Endothelial cell of umbilical vein (primary cell): ENCODE measurements at regions of chr9 and their contacts with region 1.

Region 1: GRCh38 chr9:38088006-38088925 is 19.2 kb upstream of the SHB start:
- DNase-seq: peak; percentile 70
- H3K4me3 ChIP-seq: no peak overlapping the region
- H3K27ac ChIP-seq: no peak overlapping the region
- H3K4me1 ChIP-seq: peaks cover 11% of the 10 kb centered on the region
- H3K27me3 ChIP-seq: no peaks in the 10 kb centered on the region
- CTCF ChIP-seq: peak; percentile 96 to 98
- POLR2A ChIP-seq: no peak

Region 2: GRCh38 chr9:37938121-37938891 is 150.0 kb before region 1 on chr9:
- CTCF ChIA-PET with region 1: interaction called, 13 read pairs
- POLR2A ChIA-PET with region 1: no interaction called
- dilution Hi-C with region 1: no loop called
- intact Hi-C with region 1: no loop called
- DNase-seq: peak; percentile 90
- H3K4me3 ChIP-seq: no peak overlapping the region
- H3K27ac ChIP-seq: peak overlapping the region; percentile 77
- H3K4me1 ChIP-seq: peaks cover 39% of the 10 kb centered on the region
- H3K27me3 ChIP-seq: no peaks in the 10 kb centered on the region
- CTCF ChIP-seq: no peak
- POLR2A ChIP-seq: no peak

Region 3: GRCh38 chr9:38026021-38026809 is 62.1 kb before region 1 on chr9:
- CTCF ChIA-PET with region 1: interaction called, 19 read pairs
- POLR2A ChIA-PET with region 1: no interaction called
- dilution Hi-C with region 1: no loop called
- intact Hi-C with region 1: no loop called
- DNase-seq: peak; percentile 98
- H3K4me3 ChIP-seq: no peak overlapping the region
- H3K27ac ChIP-seq: peak overlapping the region; percentile 97
- H3K4me1 ChIP-seq: peaks cover 35% of the 10 kb centered on the region
- H3K27me3 ChIP-seq: no peaks in the 10 kb centered on the region
- CTCF ChIP-seq: no peak
- POLR2A ChIP-seq: no peak

Region 4: DNA sequence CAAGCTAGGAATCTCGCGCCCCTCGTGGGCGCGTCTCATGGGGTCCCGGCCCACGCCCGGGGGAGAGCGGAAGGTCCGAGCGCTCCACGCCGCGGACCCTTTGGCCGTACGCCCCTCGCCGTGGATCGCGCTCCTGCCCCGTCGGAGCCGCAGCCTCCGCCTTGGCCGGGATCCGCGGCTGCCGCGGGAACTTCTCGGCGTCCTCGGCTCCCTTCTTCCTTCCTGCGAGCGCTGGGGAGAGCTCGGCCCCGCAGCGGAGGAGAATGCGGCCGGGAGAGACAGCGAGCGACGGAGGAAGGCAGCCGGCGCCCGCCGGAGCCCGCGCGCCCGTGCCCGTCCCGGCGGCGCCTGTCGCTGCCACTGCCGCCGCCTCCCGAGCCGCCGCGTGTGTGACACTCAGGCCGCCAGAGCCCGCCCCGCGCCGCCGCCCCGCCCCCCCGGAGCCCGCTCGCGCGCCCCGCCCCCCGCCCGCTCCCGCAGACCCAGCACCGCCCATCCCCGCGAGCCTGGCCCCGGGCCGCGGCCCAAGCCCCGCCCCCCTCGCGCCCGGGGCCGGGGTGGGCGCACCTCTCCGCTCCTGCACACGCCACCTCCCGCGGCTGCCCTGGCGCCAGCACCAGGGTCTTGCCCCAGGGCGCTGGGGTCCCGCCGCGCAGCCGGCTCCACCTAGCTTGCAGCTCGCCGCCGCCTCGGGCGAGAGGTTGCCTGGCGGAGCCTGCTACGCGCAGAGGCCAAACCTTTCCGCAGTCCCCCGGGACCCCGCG is 19.2 kb before region 1 on chr9 and contains the start of gene SHB:
- CTCF ChIA-PET with region 1: interaction called, 45 read pairs
- POLR2A ChIA-PET with region 1: no interaction called
- dilution Hi-C with region 1: no loop called
- intact Hi-C with region 1: no loop called
- DNase-seq: peak; percentile 63
- H3K4me3 ChIP-seq: peak within 1 kb of the TSS; percentile 63 to 76 (median 71)
- H3K27ac ChIP-seq: peak within 1 kb of the TSS; percentile 92
- H3K4me1 ChIP-seq: peaks cover 47% of the 10 kb centered on the region
- H3K27me3 ChIP-seq: no peaks in the 10 kb centered on the region
- CTCF ChIP-seq: peak in 1 of 2 donors; percentile 0
- POLR2A ChIP-seq: peak; percentile 84
- total RNA-seq, gene SHB: 22.3 and 24.9 TPM in 2 replicates

Region 5: DNA sequence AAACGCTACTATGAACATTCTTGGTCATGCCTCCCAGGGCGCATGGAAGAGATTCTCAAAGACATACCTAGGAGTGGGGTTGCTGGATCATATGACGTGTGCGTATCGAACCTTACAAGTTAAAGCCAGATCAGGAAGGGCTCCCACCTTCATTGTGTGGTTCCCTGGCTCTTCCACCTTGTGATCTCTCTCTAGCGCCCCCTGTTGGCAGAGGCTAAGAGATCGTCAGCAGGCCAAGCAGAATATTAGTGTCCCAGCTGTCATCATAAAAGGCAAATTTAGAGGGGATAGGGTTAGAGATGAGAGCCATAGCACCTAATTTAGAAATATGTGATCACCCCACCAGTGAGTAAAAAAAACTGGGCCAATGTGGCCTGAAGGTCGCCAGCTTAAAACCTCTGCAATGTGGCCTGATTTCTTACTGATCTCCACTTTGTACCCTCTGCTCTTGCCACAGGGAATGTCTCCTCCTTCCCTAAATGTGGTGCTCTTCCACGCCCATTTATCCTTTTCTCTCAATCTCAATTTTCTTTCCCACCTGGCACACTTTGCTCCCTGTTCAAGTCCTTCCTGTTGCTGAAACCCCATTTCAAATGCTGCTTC is 72.4 kb after region 1 on chr9:
- CTCF ChIA-PET with region 1: interaction called, 28 read pairs
- POLR2A ChIA-PET with region 1: no interaction called
- dilution Hi-C with region 1: no loop called
- intact Hi-C with region 1: loop called (anchors 1 kb)
- DNase-seq: peak; percentile 49
- H3K4me3 ChIP-seq: no peak overlapping the region
- H3K27ac ChIP-seq: no peak overlapping the region
- H3K4me1 ChIP-seq: no peaks in the 10 kb centered on the region
- H3K27me3 ChIP-seq: no peaks in the 10 kb centered on the region
- CTCF ChIP-seq: peak; percentile 77 to 86
- POLR2A ChIP-seq: no peak